HepG2 (cell line): ENCODE measurements at regions of chr12 and their contacts with region 1.

Region 1: DNA sequence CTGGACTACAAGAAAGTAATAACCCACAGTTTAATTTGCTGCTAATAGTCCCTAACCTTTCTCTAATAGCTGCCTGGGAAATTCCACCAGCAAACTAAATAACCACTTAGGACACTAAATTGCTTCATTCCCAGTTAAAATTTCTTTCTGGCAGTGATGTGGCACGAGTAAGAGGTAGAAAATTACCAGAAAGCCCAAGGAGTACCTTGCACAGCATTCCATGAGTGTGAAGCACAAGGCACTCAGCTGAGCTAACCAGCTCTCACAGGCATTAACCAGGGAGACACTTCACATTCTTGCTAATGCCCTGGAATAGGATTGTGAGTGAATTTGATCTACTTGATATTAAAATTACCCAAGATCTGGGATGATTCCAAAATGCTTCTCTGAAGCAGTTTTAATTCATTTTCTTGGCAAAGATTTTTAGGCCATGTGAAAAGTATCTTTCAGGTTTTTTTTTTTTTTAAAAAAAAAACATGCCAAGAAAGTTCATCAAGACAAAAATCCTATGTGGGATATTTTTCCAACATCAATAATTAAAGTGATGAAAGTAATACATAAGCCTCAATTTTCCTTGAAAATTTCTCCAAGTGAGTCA is 29.5 kb downstream of the TSPAN8 start:
- DNase-seq: no peak
- ATAC-seq: no peak
- H3K4me3 ChIP-seq: no peak overlapping the region
- H3K27ac ChIP-seq: no peak overlapping the region
- H3K4me1 ChIP-seq: peaks cover 14% of the 10 kb centered on the region
- H3K27me3 ChIP-seq: no peaks in the 10 kb centered on the region
- CTCF ChIP-seq: no peak
- EP300 ChIP-seq: no peak
- POLR2A ChIP-seq: no peak
- RAD21 ChIP-seq: no peak

Region 2: DNA sequence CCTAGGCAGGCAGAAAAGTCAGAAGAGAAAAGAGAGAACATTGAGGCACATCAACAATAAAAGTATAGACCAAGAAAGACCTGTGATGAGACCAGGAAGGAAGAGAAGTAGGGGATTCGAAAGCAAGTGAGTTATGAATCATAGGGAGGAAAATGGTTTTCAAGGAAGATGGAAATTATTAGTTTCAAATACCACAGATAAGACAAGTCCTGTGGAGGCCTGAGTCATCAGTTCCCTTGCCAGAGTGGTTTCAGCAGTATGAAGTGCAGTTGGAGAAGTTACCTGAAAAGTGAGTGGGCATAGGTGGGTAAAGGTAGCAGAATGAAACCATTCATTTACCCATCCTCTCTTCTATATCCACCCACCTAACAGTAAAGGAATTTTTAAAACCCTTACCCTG is 54.7 kb after region 1 on chr12:
- CTCF ChIA-PET with region 1: no interaction called
- POLR2A ChIA-PET with region 1: no interaction called
- in situ Hi-C with region 1: no loop called
- intact Hi-C with region 1: loop called (anchors 10 kb)
- DNase-seq: no peak
- ATAC-seq: no peak
- H3K4me3 ChIP-seq: no peak overlapping the region
- H3K27ac ChIP-seq: no peak overlapping the region
- H3K4me1 ChIP-seq: peaks cover 24% of the 10 kb centered on the region
- H3K27me3 ChIP-seq: no peaks in the 10 kb centered on the region
- CTCF ChIP-seq: no peak
- EP300 ChIP-seq: no peak
- POLR2A ChIP-seq: no peak
- RAD21 ChIP-seq: no peak

Region 3: DNA sequence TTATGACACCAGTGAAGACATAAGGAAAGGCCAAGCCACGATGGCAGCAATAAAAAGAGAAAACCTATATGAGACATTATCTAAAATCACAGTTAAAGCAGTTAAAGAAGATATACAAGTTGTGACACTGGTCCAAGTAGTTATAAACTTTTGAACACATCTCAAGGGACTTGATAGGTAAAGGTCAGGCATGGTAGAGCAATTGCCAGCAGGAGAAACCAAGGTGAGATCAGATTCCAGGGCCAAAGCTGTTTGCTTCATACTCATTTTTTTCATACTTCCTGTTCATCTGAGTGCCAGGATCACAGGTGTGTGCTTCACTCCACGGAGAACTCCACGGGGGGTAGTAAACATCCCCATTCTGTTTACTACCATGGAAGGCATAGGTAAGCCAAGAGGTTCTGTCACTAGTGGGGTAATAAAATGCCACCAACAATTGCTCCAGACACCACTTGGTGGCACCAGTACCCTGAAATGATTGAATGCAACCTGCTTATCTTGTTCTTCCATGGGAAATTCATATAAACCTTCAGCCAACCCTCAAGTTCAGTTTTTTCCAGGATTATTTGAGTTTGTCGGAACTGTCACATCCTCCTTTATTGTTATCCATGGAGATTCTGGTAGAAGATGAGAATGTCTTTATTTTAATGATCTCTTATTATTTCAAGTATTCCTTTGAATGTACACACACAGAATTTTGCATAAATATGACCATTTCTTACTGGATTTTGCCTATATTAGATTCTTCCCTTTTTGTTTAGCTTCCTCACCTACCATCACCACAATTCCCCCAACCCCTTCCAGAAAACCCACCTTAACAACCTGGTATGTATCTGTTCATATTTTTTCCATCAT is 88.7 kb after region 1 on chr12:
- CTCF ChIA-PET with region 1: no interaction called
- POLR2A ChIA-PET with region 1: no interaction called
- in situ Hi-C with region 1: no loop called
- intact Hi-C with region 1: loop called (anchors 5 kb)
- DNase-seq: peak; percentile 28
- ATAC-seq: peak; percentile 81
- H3K4me3 ChIP-seq: no peak overlapping the region
- H3K27ac ChIP-seq: no peak overlapping the region
- H3K4me1 ChIP-seq: peaks cover 26% of the 10 kb centered on the region
- H3K27me3 ChIP-seq: no peaks in the 10 kb centered on the region
- CTCF ChIP-seq: peak; percentile 61
- EP300 ChIP-seq: no peak
- POLR2A ChIP-seq: no peak
- RAD21 ChIP-seq: peak; percentile 34; the same call in 1 of the 2 replicates

Region 4: GRCh38 chr12:71371122-71371521 is 242.8 kb after region 1 on chr12:
- CTCF ChIA-PET with region 1: interaction called, 4 read pairs
- POLR2A ChIA-PET with region 1: no interaction called
- in situ Hi-C with region 1: no loop called
- intact Hi-C with region 1: loop called (anchors 2 kb)
- DNase-seq: peak; percentile 16
- ATAC-seq: peak; percentile 59; the same call in 2 of the 3 replicates
- H3K4me3 ChIP-seq: no peak overlapping the region
- H3K27ac ChIP-seq: no peak overlapping the region
- H3K4me1 ChIP-seq: no peaks in the 10 kb centered on the region
- H3K27me3 ChIP-seq: no peaks in the 10 kb centered on the region
- CTCF ChIP-seq: peak; percentile 55
- EP300 ChIP-seq: no peak
- POLR2A ChIP-seq: no peak
- RAD21 ChIP-seq: no peak

Region 5: GRCh38 chr12:71392521-71393145 is 264.3 kb after region 1 on chr12:
- CTCF ChIA-PET with region 1: interaction called, 13 read pairs
- POLR2A ChIA-PET with region 1: interaction called, 3 read pairs
- in situ Hi-C with region 1: loop called (anchors 10 kb)
- intact Hi-C with region 1: loop called (anchors 2 kb)
- DNase-seq: peak; percentile 69
- ATAC-seq: peak; percentile 90
- H3K4me3 ChIP-seq: no peak overlapping the region; a peak in 1 of 6 replicates
- H3K27ac ChIP-seq: no peak overlapping the region
- H3K4me1 ChIP-seq: no peaks in the 10 kb centered on the region
- H3K27me3 ChIP-seq: no peaks in the 10 kb centered on the region; a peak in 1 of 5 replicates
- CTCF ChIP-seq: peak; percentile 85
- EP300 ChIP-seq: no peak
- POLR2A ChIP-seq: no peak
- RAD21 ChIP-seq: 0 out of 2 replicates have a peak, but pooled peaks have one; percentile 44

Region 6: DNA sequence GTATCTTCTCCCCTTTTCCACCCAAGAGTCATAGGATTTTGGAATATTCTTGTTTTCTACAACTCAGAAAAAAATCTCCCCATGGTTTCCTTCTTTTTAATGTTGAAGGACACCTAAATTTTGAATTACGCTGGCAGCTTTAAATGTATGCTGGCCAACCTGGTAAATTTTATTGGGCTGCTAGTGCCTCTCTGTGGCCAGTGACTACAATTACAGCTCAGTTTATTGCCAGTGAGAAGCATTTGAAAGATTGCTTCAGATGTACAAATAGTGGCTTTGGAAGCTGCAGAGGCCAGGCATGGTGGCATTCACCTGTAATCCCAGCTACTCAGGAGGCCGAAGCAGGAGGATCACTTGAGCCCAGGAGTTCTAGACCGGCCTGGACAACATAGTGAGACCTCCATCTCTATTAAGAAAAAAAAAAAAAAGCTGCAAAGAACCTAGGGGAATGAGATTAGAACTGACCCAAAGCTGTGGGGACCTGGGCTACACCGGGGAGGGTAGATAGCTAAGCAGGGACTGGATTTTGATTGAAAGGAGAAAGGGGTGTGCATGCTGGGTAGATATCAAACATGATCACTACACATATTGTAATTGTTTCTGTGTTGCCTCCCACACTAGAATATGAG is 618.8 kb after region 1 on chr12:
- CTCF ChIA-PET with region 1: no interaction called
- POLR2A ChIA-PET with region 1: no interaction called
- in situ Hi-C with region 1: loop called (anchors 25 kb)
- intact Hi-C with region 1: no loop called
- DNase-seq: peak; percentile 66
- ATAC-seq: peak; percentile 96
- H3K4me3 ChIP-seq: no peak overlapping the region; a peak in 1 of 6 replicates
- H3K27ac ChIP-seq: no peak overlapping the region
- H3K4me1 ChIP-seq: peaks cover 10% of the 10 kb centered on the region
- H3K27me3 ChIP-seq: no peaks in the 10 kb centered on the region; a peak in 1 of 5 replicates
- CTCF ChIP-seq: peak; percentile 86
- EP300 ChIP-seq: no peak
- POLR2A ChIP-seq: no peak
- RAD21 ChIP-seq: peak; percentile 69